SK-MEL-5 (cell line): ENCODE measurements at regions of chr12 and their contacts with region 1.

Region 1: DNA sequence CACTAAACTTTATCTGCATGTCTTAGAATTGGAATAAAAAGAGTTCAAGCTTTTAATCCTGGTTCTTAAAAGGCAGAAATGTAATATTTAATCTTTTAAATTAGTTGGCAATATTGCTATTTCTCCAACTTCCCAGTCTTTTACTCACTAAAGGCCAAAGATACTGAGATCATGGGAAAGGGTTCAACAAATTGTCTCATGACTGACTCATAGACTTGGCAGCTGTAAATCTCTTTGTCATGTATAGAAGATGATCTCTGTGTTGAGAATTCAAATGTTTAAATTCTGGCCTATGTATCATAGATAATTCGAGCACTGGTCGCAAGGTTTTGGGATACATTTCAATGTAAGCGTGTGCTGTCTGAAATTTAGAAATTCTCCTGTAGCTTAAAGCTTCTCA is 40.1 kb upstream of the STRAP start:
- DNase-seq: no peak

Region 2: GRCh38 chr12:15590180-15590826 is 251.8 kb before region 1 on chr12:
- in situ Hi-C with region 1: loop called (anchors 25 kb)
- DNase-seq: peak; percentile 84